CD4-positive, alpha-beta T cell (primary cell): ENCODE measurements at regions of chr2 and their contacts with region 1.

Region 1: DNA sequence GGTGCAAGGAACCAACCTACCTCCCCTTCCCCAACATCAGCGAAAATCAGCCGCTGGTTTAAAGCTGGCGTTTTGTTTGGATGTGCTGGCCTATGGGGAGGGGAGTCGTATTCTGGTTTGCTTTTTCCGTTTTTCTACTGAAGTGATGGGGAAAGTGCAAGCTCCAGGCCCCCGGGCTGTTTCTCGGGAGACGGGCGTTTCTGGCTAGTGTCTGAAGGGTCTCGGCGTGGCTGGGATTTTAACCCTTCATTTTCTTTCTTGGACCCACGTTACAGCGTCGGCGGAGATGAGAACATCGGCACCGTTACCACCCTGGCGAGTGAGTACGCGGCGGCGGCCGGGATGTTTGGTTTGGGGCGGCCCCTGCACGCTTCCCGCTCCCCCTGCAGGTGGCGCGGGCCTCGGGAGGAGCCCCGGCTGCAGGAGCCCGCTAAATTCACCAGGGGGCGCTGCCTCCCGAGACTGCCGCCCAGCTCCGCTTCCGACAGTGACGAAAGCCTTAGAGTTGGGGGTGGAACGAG is 70.7 kb downstream of the PLB1 start:
- DNase-seq: peak; percentile 77 to 95 (median 88)
- ATAC-seq: peak; percentile 97
- H3K4me3 ChIP-seq: peak overlapping the region; percentile 68
- H3K4me3 Mint-ChIP-seq: peak overlapping the region; percentile 95
- H3K27ac ChIP-seq: peak overlapping the region in 1 of 2 donors; percentile 3
- H3K27ac Mint-ChIP-seq: peak overlapping the region; percentile 86
- H3K4me1 ChIP-seq: peaks cover 19% of the 10 kb centered on the region
- H3K4me1 Mint-ChIP-seq: peaks cover 20% of the 10 kb centered on the region
- H3K27me3 ChIP-seq: no peaks in the 10 kb centered on the region
- H3K27me3 Mint-ChIP-seq: no peaks in the 10 kb centered on the region
- CTCF ChIP-seq: peak; percentile 100

Region 2: DNA sequence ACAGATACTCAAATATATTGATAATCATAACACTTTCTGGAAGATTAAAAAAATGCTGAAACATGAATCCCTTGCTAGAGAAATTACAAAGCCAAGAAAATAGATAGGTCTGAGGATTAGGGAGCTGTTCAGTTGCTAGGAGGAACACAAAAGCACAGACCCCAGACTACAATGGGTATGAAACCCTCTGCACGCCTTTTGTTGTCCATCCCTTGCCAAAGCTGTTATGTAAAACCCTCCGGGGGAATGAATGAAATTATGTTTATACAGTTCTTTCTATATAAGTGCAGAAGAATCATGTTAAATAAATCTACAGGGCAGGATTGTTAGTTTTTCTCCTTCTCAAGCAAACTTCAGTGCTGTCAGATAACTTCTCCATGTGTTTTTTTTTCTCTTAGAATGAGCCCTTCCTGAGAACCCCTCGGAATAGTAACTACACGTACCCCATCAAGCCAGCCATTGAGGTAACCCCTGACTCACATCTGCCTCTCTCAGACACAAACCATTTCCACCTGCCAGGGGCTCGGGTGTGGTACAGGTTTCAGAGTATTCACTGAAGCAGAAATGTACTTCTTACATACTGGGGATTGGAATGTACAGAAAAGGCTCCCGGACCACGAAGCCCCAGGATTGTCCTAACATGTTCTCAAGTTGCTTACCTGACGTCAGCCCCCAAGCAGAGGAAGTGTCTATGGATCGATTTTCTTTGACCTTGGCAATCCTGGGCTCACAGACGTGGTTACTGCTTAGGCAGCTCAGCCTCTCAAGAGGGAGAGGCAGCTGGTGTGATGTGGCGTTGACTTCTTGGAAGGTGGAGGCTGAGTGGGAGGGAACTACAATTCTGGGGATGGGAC is 47.3 kb after region 1 on chr2:
- CTCF ChIA-PET with region 1: interaction called, 10 read pairs
- POLR2A ChIA-PET with region 1: no interaction called
- intact Hi-C with region 1: no loop called
- DNase-seq: peak in 9 of 14 experiments; percentile 19 to 60 (median 41)
- ATAC-seq: peak; percentile 45
- H3K4me3 ChIP-seq: no peak overlapping the region
- H3K4me3 Mint-ChIP-seq: no peak overlapping the region
- H3K27ac ChIP-seq: peak overlapping the region; percentile 58 to 71
- H3K27ac Mint-ChIP-seq: no peak overlapping the region
- H3K4me1 ChIP-seq: peaks cover 73% of the 10 kb centered on the region
- H3K4me1 Mint-ChIP-seq: peaks cover 33% of the 10 kb centered on the region
- H3K27me3 ChIP-seq: no peaks in the 10 kb centered on the region
- H3K27me3 Mint-ChIP-seq: no peaks in the 10 kb centered on the region
- CTCF ChIP-seq: no peak

Region 3: GRCh38 chr2:28780496-28780895 is 213.9 kb after region 1 on chr2:
- CTCF ChIA-PET with region 1: interaction called, 13 read pairs
- POLR2A ChIA-PET with region 1: interaction called, 3 read pairs
- intact Hi-C with region 1: no loop called
- DNase-seq: no peak
- ATAC-seq: no peak
- H3K4me3 ChIP-seq: no peak overlapping the region
- H3K4me3 Mint-ChIP-seq: no peak overlapping the region
- H3K27ac ChIP-seq: no peak overlapping the region
- H3K27ac Mint-ChIP-seq: no peak overlapping the region
- H3K4me1 ChIP-seq: peaks cover 4% of the 10 kb centered on the region
- H3K4me1 Mint-ChIP-seq: peaks cover 37% of the 10 kb centered on the region
- H3K27me3 ChIP-seq: no peaks in the 10 kb centered on the region
- H3K27me3 Mint-ChIP-seq: no peaks in the 10 kb centered on the region
- CTCF ChIP-seq: no peak

Region 4: GRCh38 chr2:28821295-28821958 is 254.8 kb after region 1 on chr2:
- CTCF ChIA-PET with region 1: interaction called, 7 read pairs
- POLR2A ChIA-PET with region 1: no interaction called
- intact Hi-C with region 1: loop called in 1 of 2 experiments (anchors 1 kb)
- DNase-seq: peak in 13 of 14 experiments; percentile 18 to 84 (median 44)
- ATAC-seq: peak; percentile 94
- H3K4me3 ChIP-seq: no peak overlapping the region
- H3K4me3 Mint-ChIP-seq: no peak overlapping the region
- H3K27ac ChIP-seq: no peak overlapping the region
- H3K27ac Mint-ChIP-seq: no peak overlapping the region
- H3K4me1 ChIP-seq: no peaks in the 10 kb centered on the region
- H3K4me1 Mint-ChIP-seq: no peaks in the 10 kb centered on the region
- H3K27me3 ChIP-seq: no peaks in the 10 kb centered on the region
- H3K27me3 Mint-ChIP-seq: no peaks in the 10 kb centered on the region
- CTCF ChIP-seq: peak; percentile 75

Region 5: GRCh38 chr2:28952816-28953211 is 386.2 kb after region 1 on chr2:
- CTCF ChIA-PET with region 1: no interaction called
- POLR2A ChIA-PET with region 1: no interaction called
- intact Hi-C with region 1: loop called (anchors 5 to 10 kb)
- DNase-seq: no peak
- ATAC-seq: peak; percentile 43
- H3K4me3 ChIP-seq: no peak overlapping the region
- H3K4me3 Mint-ChIP-seq: no peak overlapping the region
- H3K27ac ChIP-seq: no peak overlapping the region
- H3K27ac Mint-ChIP-seq: no peak overlapping the region
- H3K4me1 ChIP-seq: peaks cover 3% of the 10 kb centered on the region
- H3K4me1 Mint-ChIP-seq: no peaks in the 10 kb centered on the region
- H3K27me3 ChIP-seq: no peaks in the 10 kb centered on the region
- H3K27me3 Mint-ChIP-seq: no peaks in the 10 kb centered on the region
- CTCF ChIP-seq: no peak

Region 6: DNA sequence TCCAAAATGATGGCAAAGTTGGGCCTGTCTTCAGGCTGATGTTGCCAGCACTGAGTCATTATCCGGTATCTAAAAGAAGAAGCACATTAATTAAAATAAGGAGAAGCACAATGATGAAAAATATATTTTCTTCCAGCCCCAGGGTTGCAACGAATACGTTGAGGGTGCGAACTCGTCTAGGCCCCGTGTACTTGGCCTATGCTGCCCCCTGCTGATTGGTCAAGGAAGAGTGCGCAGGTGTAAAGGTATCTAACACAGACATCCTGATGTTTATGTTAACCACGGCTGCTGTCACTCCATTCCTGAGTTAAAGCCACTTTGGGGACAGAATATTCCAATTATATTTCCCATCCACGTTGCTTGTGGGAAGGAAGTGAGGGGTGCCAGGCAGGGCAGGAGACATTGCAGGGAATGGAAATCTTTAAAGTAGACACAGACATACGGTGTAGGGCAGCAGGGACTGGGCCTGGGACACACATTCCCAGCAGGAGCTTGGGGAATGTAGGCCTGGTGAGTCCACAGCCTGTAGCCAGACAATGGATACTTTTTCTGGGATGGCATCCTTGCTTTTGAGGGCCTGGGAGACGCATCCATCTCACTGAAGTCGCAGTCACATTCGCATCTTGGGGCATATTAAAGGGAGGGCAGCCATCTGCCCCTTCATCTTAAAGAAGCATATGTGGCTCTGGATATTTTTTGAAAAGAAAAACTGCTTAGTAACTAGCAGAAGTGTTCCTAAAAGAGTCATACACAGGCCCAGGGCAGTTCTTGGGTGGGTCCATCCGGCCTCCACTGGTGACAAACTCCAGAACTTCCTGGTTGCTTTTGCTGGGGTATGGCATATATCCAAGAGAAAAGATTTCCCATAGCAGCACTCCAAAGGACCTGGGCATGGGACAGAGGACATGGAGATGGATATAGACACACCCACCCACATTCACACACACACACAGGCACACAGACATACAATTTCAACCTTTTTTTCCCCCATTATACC is 630.5 kb after region 1 on chr2:
- CTCF ChIA-PET with region 1: no interaction called
- POLR2A ChIA-PET with region 1: no interaction called
- intact Hi-C with region 1: loop called in 1 of 2 experiments (anchors 5 kb)
- DNase-seq: peak; percentile 64 to 85 (median 73)
- ATAC-seq: peak; percentile 97
- H3K4me3 ChIP-seq: no peak overlapping the region
- H3K4me3 Mint-ChIP-seq: no peak overlapping the region
- H3K27ac ChIP-seq: no peak overlapping the region
- H3K27ac Mint-ChIP-seq: no peak overlapping the region
- H3K4me1 ChIP-seq: peaks cover 3% of the 10 kb centered on the region
- H3K4me1 Mint-ChIP-seq: peaks cover 5% of the 10 kb centered on the region
- H3K27me3 ChIP-seq: no peaks in the 10 kb centered on the region
- H3K27me3 Mint-ChIP-seq: no peaks in the 10 kb centered on the region
- CTCF ChIP-seq: peak; percentile 95